Activated T-helper 2 cell treated with anti-CD3 and anti-CD28 coated beads, Interferon-gamma antibody, Interleukin-2, Interleukin-4, amounts not matched to agents 10 μg/mL and 5 μg/mL and 100 μg/mL, durations not matched to agents 14 hours and 24 hours and 36 hours (primary cell): ENCODE measurements at regions of chr7 and their contacts with region 1.

Region 1: GRCh38 chr7:135977007-135977741 is at the start of gene MTPN:
- DNase-seq: peak; percentile 96
- H3K4me3 Mint-ChIP-seq: peak within 1 kb of the TSS; percentile 88
- H3K27ac Mint-ChIP-seq: peak within 1 kb of the TSS; percentile 76
- H3K4me1 Mint-ChIP-seq: peaks cover 60% of the 10 kb centered on the region
- H3K27me3 Mint-ChIP-seq: no peaks in the 10 kb centered on the region
- total RNA-seq, gene MTPN: 113 and 118 TPM in 2 replicates

Region 2: GRCh38 chr7:134669845-134670373 is 1307.3 kb before region 1 on chr7:
- intact Hi-C with region 1: no loop called
- DNase-seq: peak; percentile 34
- H3K4me3 Mint-ChIP-seq: no peak overlapping the region
- H3K27ac Mint-ChIP-seq: peak overlapping the region; percentile 71
- H3K4me1 Mint-ChIP-seq: peaks cover 25% of the 10 kb centered on the region
- H3K27me3 Mint-ChIP-seq: no peaks in the 10 kb centered on the region

Region 3: GRCh38 chr7:135211179-135211945 is 765.8 kb before region 1 on chr7 and contains the start of gene WDR91:
- intact Hi-C with region 1: loop called (anchors 5 kb)
- DNase-seq: peak; percentile 86
- H3K4me3 Mint-ChIP-seq: peak within 1 kb of the TSS; percentile 95
- H3K27ac Mint-ChIP-seq: peak within 1 kb of the TSS; percentile 96
- H3K4me1 Mint-ChIP-seq: peaks cover 32% of the 10 kb centered on the region
- H3K27me3 Mint-ChIP-seq: no peaks in the 10 kb centered on the region
- total RNA-seq, gene WDR91: 19.2 and 22.6 TPM in 2 replicates

Region 4: GRCh38 chr7:135662373-135663114 is 314.6 kb before region 1 on chr7 and contains the start of gene STMP1:
- intact Hi-C with region 1: loop called (anchors 1 kb)
- DNase-seq: peak; percentile 92
- H3K4me3 Mint-ChIP-seq: peak within 1 kb of the TSS; percentile 95
- H3K27ac Mint-ChIP-seq: peak within 1 kb of the TSS; percentile 91
- H3K4me1 Mint-ChIP-seq: peaks cover 28% of the 10 kb centered on the region
- H3K27me3 Mint-ChIP-seq: no peaks in the 10 kb centered on the region
- total RNA-seq, gene STMP1: 24.3 and 25.1 TPM in 2 replicates

Region 5: GRCh38 chr7:135993950-135994349 is 16.8 kb after region 1 on chr7:
- intact Hi-C with region 1: loop called (anchors 2 kb)
- DNase-seq: no peak
- H3K4me3 Mint-ChIP-seq: no peak overlapping the region
- H3K27ac Mint-ChIP-seq: no peak overlapping the region
- H3K4me1 Mint-ChIP-seq: peaks cover 19% of the 10 kb centered on the region
- H3K27me3 Mint-ChIP-seq: peaks cover 2% of the 10 kb centered on the region

Region 6: GRCh38 chr7:136030862-136031318 is 53.7 kb after region 1 on chr7:
- intact Hi-C with region 1: loop called (anchors 1 kb)
- DNase-seq: no peak
- H3K4me3 Mint-ChIP-seq: no peak overlapping the region
- H3K27ac Mint-ChIP-seq: peak overlapping the region; percentile 21
- H3K4me1 Mint-ChIP-seq: peaks cover 14% of the 10 kb centered on the region
- H3K27me3 Mint-ChIP-seq: peaks cover 13% of the 10 kb centered on the region

Region 7: GRCh38 chr7:136150311-136150710 is 173.1 kb after region 1 on chr7:
- intact Hi-C with region 1: no loop called
- DNase-seq: no peak
- H3K4me3 Mint-ChIP-seq: no peak overlapping the region
- H3K27ac Mint-ChIP-seq: no peak overlapping the region
- H3K4me1 Mint-ChIP-seq: no peaks in the 10 kb centered on the region
- H3K27me3 Mint-ChIP-seq: no peaks in the 10 kb centered on the region